Motor neuron (in vitro differentiated cells): ENCODE measurements at regions of chr3 and their contacts with region 1.

Region 1: GRCh38 chr3:194166682-194167479 is 30.9 kb downstream of the HES1 start:
- ATAC-seq: peak in 5 of 8 experiments; percentile 27 to 43 (median 35)
- H3K4me3 ChIP-seq: no peak overlapping the region
- H3K27ac ChIP-seq: no peak overlapping the region
- H3K4me1 ChIP-seq: peaks cover 37 to 45% of the 10 kb centered on the region in 2 donors

Region 2: GRCh38 chr3:194296454-194297263 is 129.8 kb after region 1 on chr3:
- in situ Hi-C with region 1: loop called in 1 of 9 experiments (anchors 25 kb)
- ATAC-seq: peak; percentile 28 to 85 (median 76)
- H3K4me3 ChIP-seq: peak overlapping the region in 4 of 5 donors; percentile 1 to 23 (median 10)
- H3K27ac ChIP-seq: peak overlapping the region; percentile 71 to 72
- H3K4me1 ChIP-seq: peaks cover 30 to 38% of the 10 kb centered on the region in 2 donors